ENCODE measurements at regions of chr19 and their contacts with region 1.

Region 1: GRCh38 chr19:35352448-35353304 is 5.0 kb downstream of the FFAR1 start:
- DNase-seq: peak; percentile 72

Region 2: GRCh38 chr19:35295792-35296462 is 56.7 kb before region 1 on chr19:
- in situ Hi-C with region 1: no loop called
- DNase-seq: no peak

Region 3: GRCh38 chr19:35436477-35437405 is 84.1 kb after region 1 on chr19:
- in situ Hi-C with region 1: loop called (anchors 10 kb)
- DNase-seq: peak; percentile 33